K562 (cell line): ENCODE measurements at regions of chrX and their contacts with region 1.

Region 1: GRCh38 chrX:138745196-138745595 is 33.7 kb upstream of the FGF13 start:
- DNase-seq: peak; percentile 34 to 59 (median 56)
- ATAC-seq: peak; percentile 81
- H3K4me3 ChIP-seq: no peak overlapping the region
- H3K27ac ChIP-seq: no peak overlapping the region
- H3K4me1 ChIP-seq: no peaks in the 10 kb centered on the region
- H3K27me3 ChIP-seq: no peaks in the 10 kb centered on the region
- CTCF ChIP-seq: peak; percentile 33 to 66 (median 50); a peak in 5 of 6 replicates
- EP300 ChIP-seq: no peak
- POLR2A ChIP-seq: no peak
- RAD21 ChIP-seq: peak; percentile 39 to 60; a peak in 3 of 4 replicates

Region 2: GRCh38 chrX:137432608-137433007 is 1312.6 kb before region 1 on chrX:
- CTCF ChIA-PET with region 1: interaction called, 4 read pairs
- POLR2A ChIA-PET with region 1: no interaction called
- in situ Hi-C with region 1: no loop called
- intact Hi-C with region 1: loop called (anchors 10 kb)
- DNase-seq: peak; percentile 18 to 35 (median 28)
- ATAC-seq: peak; percentile 74
- H3K4me3 ChIP-seq: no peak overlapping the region
- H3K27ac ChIP-seq: no peak overlapping the region
- H3K4me1 ChIP-seq: peaks cover 0 to 6% of the 10 kb centered on the region in 2 experiments; a peak in 2 of 5 replicates
- H3K27me3 ChIP-seq: peaks cover 6 to 16% of the 10 kb centered on the region in 2 experiments; a peak in 3 of 5 replicates
- CTCF ChIP-seq: peak; percentile 31 to 60 (median 55); a peak in 5 of 6 replicates
- EP300 ChIP-seq: no peak
- POLR2A ChIP-seq: no peak
- RAD21 ChIP-seq: peak; percentile 58

Region 3: GRCh38 chrX:138128027-138128671 is 617.0 kb before region 1 on chrX:
- CTCF ChIA-PET with region 1: interaction called, 3 read pairs
- POLR2A ChIA-PET with region 1: no interaction called
- in situ Hi-C with region 1: no loop called
- intact Hi-C with region 1: loop called (anchors 1 kb)
- DNase-seq: peak; percentile 16 to 34 (median 22)
- ATAC-seq: peak; percentile 88
- H3K4me3 ChIP-seq: no peak overlapping the region
- H3K27ac ChIP-seq: no peak overlapping the region
- H3K4me1 ChIP-seq: no peaks in the 10 kb centered on the region
- H3K27me3 ChIP-seq: no peaks in the 10 kb centered on the region
- CTCF ChIP-seq: peak; percentile 38 to 60 (median 59); a peak in 5 of 6 replicates
- EP300 ChIP-seq: no peak
- POLR2A ChIP-seq: no peak
- RAD21 ChIP-seq: peak in 1 of 2 experiments; percentile 49; a peak in 3 of 4 replicates

Region 4: GRCh38 chrX:138191998-138192397 is 553.2 kb before region 1 on chrX:
- CTCF ChIA-PET with region 1: no interaction called
- POLR2A ChIA-PET with region 1: interaction called, 3 read pairs
- in situ Hi-C with region 1: loop called (anchors 25 kb)
- intact Hi-C with region 1: loop called (anchors 1 kb)
- DNase-seq: peak; percentile 10 to 37 (median 20)
- ATAC-seq: peak; percentile 66; the same call in 1 of the 3 replicates
- H3K4me3 ChIP-seq: no peak overlapping the region
- H3K27ac ChIP-seq: no peak overlapping the region
- H3K4me1 ChIP-seq: no peaks in the 10 kb centered on the region
- H3K27me3 ChIP-seq: no peaks in the 10 kb centered on the region
- CTCF ChIP-seq: peak; percentile 26 to 57 (median 29); a peak in 3 of 6 replicates
- EP300 ChIP-seq: no peak
- POLR2A ChIP-seq: no peak
- RAD21 ChIP-seq: peak; percentile 49 to 57

Region 5: GRCh38 chrX:138298259-138298658 is 446.9 kb before region 1 on chrX:
- CTCF ChIA-PET with region 1: no interaction called
- POLR2A ChIA-PET with region 1: no interaction called
- in situ Hi-C with region 1: no loop called
- intact Hi-C with region 1: loop called (anchors 5 kb)
- DNase-seq: no peak
- ATAC-seq: no peak
- H3K4me3 ChIP-seq: no peak overlapping the region
- H3K27ac ChIP-seq: no peak overlapping the region
- H3K4me1 ChIP-seq: no peaks in the 10 kb centered on the region
- H3K27me3 ChIP-seq: no peaks in the 10 kb centered on the region
- CTCF ChIP-seq: no peak
- EP300 ChIP-seq: no peak
- POLR2A ChIP-seq: no peak
- RAD21 ChIP-seq: no peak

Region 6: DNA sequence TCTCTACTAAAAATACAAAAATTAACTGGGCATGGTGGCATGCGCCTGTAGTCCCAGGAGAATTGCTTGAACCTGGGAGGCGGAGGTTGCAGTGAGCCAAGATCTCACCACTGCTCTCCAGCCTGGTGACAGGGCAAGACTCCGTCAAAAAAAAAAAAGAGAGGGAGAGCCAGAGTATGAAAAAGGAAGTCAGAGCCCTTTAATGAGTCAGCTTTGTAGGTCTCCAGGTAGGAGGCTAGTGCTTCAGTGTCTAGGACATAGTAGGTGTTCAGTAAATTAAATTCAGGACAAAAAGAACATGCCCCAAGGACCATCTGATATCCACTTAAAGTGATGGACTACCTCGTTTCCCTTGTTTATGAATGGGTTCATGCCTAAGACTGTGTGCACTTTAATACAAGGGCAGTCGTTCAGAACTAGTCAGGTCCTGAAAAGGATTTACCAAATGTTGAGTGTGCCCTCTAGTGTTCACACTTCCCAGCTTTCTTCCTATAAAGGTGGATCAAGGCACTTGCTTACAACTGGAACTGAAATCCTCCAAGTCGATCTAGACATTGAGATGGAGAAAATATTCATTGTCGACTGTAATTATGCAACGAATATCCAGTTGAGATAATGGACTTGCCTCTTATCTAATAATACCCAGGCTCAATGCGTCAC is 814.3 kb after region 1 on chrX:
- CTCF ChIA-PET with region 1: no interaction called
- POLR2A ChIA-PET with region 1: no interaction called
- in situ Hi-C with region 1: loop called (anchors 25 kb)
- intact Hi-C with region 1: loop called (anchors 5 kb)
- DNase-seq: peak; percentile 4 to 64 (median 18)
- ATAC-seq: peak; percentile 88
- H3K4me3 ChIP-seq: no peak overlapping the region
- H3K27ac ChIP-seq: no peak overlapping the region
- H3K4me1 ChIP-seq: no peaks in the 10 kb centered on the region
- H3K27me3 ChIP-seq: peaks cover 2 to 17% of the 10 kb centered on the region in 2 experiments; a peak in 3 of 5 replicates
- CTCF ChIP-seq: peak; percentile 42 to 66 (median 57); a peak in 5 of 6 replicates
- EP300 ChIP-seq: no peak
- POLR2A ChIP-seq: no peak
- RAD21 ChIP-seq: peak; percentile 66 to 78